WTC11 (cell line): ENCODE measurements at regions of chr15 and their contacts with region 1.

Region 1: DNA sequence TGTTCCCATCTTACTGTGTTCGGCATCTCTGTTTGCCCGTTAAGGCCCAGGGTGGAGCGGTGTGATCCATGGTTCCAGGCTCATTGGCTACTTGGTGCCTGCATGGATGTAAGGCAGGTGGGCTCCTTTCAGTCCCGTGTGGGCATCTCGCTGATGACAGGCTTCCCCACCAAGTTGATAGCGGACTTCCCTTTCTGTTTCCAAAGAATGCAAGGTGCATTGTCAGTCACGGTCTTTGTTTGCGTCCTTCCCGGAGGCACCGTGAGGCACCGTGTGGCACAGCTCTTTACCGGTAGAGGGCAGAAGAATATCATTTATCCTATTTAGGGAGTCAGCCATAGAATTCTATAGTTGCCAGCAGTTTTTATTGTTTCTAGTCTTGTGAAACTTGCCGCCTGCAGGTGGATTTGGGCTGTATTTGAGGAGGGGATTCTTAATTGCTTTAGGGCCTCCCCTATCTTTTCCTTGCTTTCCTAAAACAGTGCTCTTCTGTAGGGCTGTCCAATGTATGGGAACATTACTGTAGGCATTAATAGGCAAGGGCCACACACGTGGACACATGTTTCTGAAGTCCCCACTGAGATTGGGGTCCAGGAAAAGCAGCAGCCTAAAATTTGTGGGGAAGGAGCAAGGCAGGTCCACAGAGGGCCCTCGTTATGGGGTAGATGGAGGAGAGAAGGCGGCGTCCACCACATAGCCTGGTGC is 244.1 kb downstream of the SLCO3A1 start:
- DNase-seq: peak; percentile 76
- ATAC-seq: peak; percentile 84
- H3K4me3 Mint-ChIP-seq: no peak overlapping the region
- H3K27ac Mint-ChIP-seq: peak overlapping the region; percentile 31; the same call in 1 of the 2 replicates
- H3K4me1 Mint-ChIP-seq: peaks cover 36% of the 10 kb centered on the region
- H3K27me3 Mint-ChIP-seq: no peaks in the 10 kb centered on the region
- CTCF ChIP-seq: peak; percentile 65

Region 2: DNA sequence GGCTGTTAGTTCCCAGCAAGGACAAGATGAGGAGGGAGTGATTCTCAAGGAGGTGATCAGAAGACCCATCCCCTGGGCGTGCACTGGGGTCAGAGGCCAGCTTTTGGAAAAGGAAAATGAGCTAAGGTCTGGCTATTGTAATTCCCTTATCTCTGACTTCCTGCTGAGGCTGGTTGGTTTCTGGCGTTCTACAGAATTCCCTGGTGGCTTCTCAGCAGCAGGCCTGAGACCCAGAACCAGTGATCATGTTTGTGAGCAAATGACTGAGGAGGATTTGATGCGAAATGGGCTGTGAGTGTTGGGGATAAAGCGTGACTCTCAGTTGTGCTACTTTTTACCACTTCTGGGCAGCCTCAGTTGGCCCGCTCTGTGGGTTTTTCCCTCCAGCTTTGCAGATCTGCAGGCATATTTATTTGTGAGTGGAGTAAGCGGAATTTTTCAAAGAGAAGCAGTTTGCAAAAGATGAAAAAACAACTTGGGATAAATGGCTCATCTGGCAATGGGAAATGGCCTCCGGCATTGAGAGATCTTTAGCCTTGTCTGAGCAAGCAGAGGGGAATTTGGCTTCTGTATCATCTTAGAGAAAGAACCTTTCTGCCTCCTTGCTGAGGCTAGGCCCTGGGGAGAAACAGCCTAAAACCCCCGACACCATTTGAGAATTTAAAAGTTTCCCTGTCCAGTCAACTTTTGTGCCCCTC is 141.5 kb before region 1 on chr15:
- CTCF ChIA-PET with region 1: no interaction called
- POLR2A ChIA-PET with region 1: no interaction called
- DNase-seq: no peak
- ATAC-seq: peak; percentile 71
- H3K4me3 Mint-ChIP-seq: no peak overlapping the region
- H3K27ac Mint-ChIP-seq: peak overlapping the region; percentile 86
- H3K4me1 Mint-ChIP-seq: peaks cover 16% of the 10 kb centered on the region
- H3K27me3 Mint-ChIP-seq: no peaks in the 10 kb centered on the region
- CTCF ChIP-seq: no peak

Region 3: GRCh38 chr15:92164327-92165000 is 66.8 kb after region 1 on chr15:
- CTCF ChIA-PET with region 1: interaction called, 20 read pairs
- POLR2A ChIA-PET with region 1: no interaction called
- DNase-seq: no peak
- ATAC-seq: peak; percentile 49
- H3K4me3 Mint-ChIP-seq: peak overlapping the region; percentile 12; the same call in 1 of the 2 replicates
- H3K27ac Mint-ChIP-seq: peak overlapping the region; percentile 96
- H3K4me1 Mint-ChIP-seq: peaks cover 67% of the 10 kb centered on the region
- H3K27me3 Mint-ChIP-seq: no peaks in the 10 kb centered on the region
- CTCF ChIP-seq: no peak

Region 4: GRCh38 chr15:92205255-92205739 is 107.7 kb after region 1 on chr15:
- CTCF ChIA-PET with region 1: interaction called, 11 read pairs
- POLR2A ChIA-PET with region 1: no interaction called
- DNase-seq: peak; percentile 41
- ATAC-seq: peak; percentile 84
- H3K4me3 Mint-ChIP-seq: no peak overlapping the region
- H3K27ac Mint-ChIP-seq: 0 out of 2 replicates have a peak overlapping the region, but pooled peaks have one; percentile 15
- H3K4me1 Mint-ChIP-seq: peaks cover 47% of the 10 kb centered on the region
- H3K27me3 Mint-ChIP-seq: no peaks in the 10 kb centered on the region; the same call in 1 of the 2 replicates
- CTCF ChIP-seq: no peak

Region 5: DNA sequence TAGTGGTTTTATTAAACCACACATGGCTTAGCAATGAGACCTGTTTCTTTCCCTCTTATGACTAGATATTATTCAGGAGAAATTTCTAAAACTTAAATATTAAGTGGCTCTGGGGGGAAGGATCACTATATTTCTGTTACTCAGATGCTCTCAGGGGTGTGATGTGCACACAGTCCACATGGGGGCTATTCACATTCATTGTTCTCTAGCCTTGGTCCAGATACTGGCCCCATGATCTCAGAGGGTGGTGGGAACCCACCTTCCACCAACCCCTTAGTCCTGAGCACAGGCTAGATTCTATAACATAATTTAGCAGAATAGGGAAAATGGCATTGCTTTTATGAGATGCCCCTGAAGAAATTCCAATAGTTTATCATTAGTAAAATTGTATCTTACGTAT is 147.1 kb after region 1 on chr15:
- CTCF ChIA-PET with region 1: no interaction called
- POLR2A ChIA-PET with region 1: no interaction called
- DNase-seq: no peak
- ATAC-seq: no peak
- H3K4me3 Mint-ChIP-seq: no peak overlapping the region
- H3K27ac Mint-ChIP-seq: no peak overlapping the region
- H3K4me1 Mint-ChIP-seq: no peaks in the 10 kb centered on the region
- H3K27me3 Mint-ChIP-seq: no peaks in the 10 kb centered on the region
- CTCF ChIP-seq: no peak